ENCODE measurements at regions of chr19 and their contacts with region 1.

Region 1: GRCh38 chr19:14006243-14006765 is at the start of gene RFX1:
- DNase-seq: peak; percentile 99
- H3K4me3 ChIP-seq: peak within 1 kb of the TSS; percentile 78
- H3K27ac ChIP-seq: peak within 1 kb of the TSS; percentile 87
- H3K4me1 ChIP-seq: peaks cover 42% of the 10 kb centered on the region
- CTCF ChIP-seq: no peak
- total RNA-seq, gene RFX1: 3.5 and 4.4 TPM in 2 replicates

Region 2: GRCh38 chr19:13861732-13862531 is 144.4 kb before region 1 on chr19:
- CTCF ChIA-PET with region 1: no interaction called
- POLR2A ChIA-PET with region 1: no interaction called
- intact Hi-C with region 1: no loop called
- DNase-seq: peak; percentile 76
- H3K4me3 ChIP-seq: peak overlapping the region; percentile 56
- H3K27ac ChIP-seq: no peak overlapping the region
- H3K4me1 ChIP-seq: peaks cover 13% of the 10 kb centered on the region
- CTCF ChIP-seq: peak; percentile 86

Region 3: GRCh38 chr19:13952154-13953035 is 53.9 kb before region 1 on chr19 and contains the start of gene DCAF15:
- CTCF ChIA-PET with region 1: no interaction called
- POLR2A ChIA-PET with region 1: interaction called, 6 read pairs
- intact Hi-C with region 1: loop called (anchors 1 kb)
- DNase-seq: peak; percentile 100
- H3K4me3 ChIP-seq: peak within 1 kb of the TSS; percentile 85
- H3K27ac ChIP-seq: peak within 1 kb of the TSS; percentile 41
- H3K4me1 ChIP-seq: peaks cover 16% of the 10 kb centered on the region
- CTCF ChIP-seq: no peak
- total RNA-seq, gene DCAF15: 61.0 and 71.3 TPM in 2 replicates

Region 4: GRCh38 chr19:13986348-13986904 is 19.9 kb before region 1 on chr19:
- CTCF ChIA-PET with region 1: no interaction called
- POLR2A ChIA-PET with region 1: interaction called, 39 read pairs
- intact Hi-C with region 1: loop called (anchors 1 kb)
- DNase-seq: peak; percentile 98
- H3K4me3 ChIP-seq: peak overlapping the region; percentile 67
- H3K27ac ChIP-seq: peak overlapping the region; percentile 99
- H3K4me1 ChIP-seq: peaks cover 78% of the 10 kb centered on the region
- CTCF ChIP-seq: no peak

Region 5: GRCh38 chr19:14081325-14082093 is 75.2 kb after region 1 on chr19:
- CTCF ChIA-PET with region 1: no interaction called
- POLR2A ChIA-PET with region 1: no interaction called
- intact Hi-C with region 1: loop called (anchors 1 kb)
- DNase-seq: peak; percentile 100
- H3K4me3 ChIP-seq: peak overlapping the region; percentile 72
- H3K27ac ChIP-seq: peak overlapping the region; percentile 54
- H3K4me1 ChIP-seq: peaks cover 19% of the 10 kb centered on the region
- CTCF ChIP-seq: no peak

Measured in OCI-LY7 (cell line).